ENCODE measurements at regions of chr1 and their contacts with region 1.

Region 1: GRCh38 chr1:32215629-32216480 is 6.3 kb downstream of the TMEM234 start:
- DNase-seq: no peak
- H3K4me3 ChIP-seq: no peak overlapping the region
- CTCF ChIP-seq: peak; percentile 86

Region 2: GRCh38 chr1:32151319-32151787 is 64.5 kb before region 1 on chr1:
- CTCF ChIA-PET with region 1: no interaction called
- POLR2A ChIA-PET with region 1: no interaction called
- DNase-seq: peak; percentile 65
- H3K4me3 ChIP-seq: no peak overlapping the region
- CTCF ChIP-seq: no peak

Region 3: DNA sequence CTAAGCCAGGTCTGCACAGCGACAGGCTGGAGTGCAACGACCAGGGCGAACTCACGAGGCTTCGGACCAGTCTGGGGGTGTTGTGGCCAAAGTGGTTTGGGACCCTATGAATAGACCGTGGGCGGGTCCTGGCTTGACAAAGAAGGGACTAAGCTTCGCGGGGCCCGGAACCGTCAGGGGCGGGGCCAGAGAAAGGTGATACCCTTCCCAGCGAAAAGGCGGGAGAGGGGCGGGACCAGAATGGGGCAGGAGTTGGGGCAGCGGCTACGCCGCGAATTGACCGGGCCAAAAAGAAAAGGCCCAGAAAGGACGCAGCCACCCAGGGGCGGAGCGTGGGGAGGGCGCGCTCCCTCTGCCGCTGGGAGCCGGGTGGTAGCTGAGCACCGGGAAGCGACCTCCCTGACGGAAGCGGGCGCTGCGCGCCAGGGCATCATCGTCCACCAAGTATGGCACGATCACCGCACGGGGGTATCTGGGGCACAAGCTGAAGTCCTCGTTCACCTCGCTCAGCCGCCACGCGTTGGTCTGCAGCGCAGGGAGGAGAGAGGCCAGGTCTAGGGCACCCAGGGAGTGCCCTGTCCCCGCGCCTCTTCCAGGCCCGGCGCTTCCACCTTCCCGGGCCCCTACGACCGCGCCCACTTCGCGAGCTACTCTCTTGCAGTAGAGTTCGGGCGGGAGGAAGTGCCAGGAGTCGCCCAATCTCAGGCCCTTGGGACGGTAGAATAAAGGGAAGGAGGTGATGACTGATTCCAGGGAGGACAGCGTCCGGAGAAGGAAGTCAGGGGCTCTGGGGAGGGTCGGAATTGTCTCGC is 24.5 kb after region 1 on chr1:
- CTCF ChIA-PET with region 1: interaction called, 32 read pairs
- POLR2A ChIA-PET with region 1: no interaction called
- DNase-seq: no peak
- H3K4me3 ChIP-seq: peak overlapping the region; percentile 67
- CTCF ChIP-seq: peak; percentile 37

Region 4: DNA sequence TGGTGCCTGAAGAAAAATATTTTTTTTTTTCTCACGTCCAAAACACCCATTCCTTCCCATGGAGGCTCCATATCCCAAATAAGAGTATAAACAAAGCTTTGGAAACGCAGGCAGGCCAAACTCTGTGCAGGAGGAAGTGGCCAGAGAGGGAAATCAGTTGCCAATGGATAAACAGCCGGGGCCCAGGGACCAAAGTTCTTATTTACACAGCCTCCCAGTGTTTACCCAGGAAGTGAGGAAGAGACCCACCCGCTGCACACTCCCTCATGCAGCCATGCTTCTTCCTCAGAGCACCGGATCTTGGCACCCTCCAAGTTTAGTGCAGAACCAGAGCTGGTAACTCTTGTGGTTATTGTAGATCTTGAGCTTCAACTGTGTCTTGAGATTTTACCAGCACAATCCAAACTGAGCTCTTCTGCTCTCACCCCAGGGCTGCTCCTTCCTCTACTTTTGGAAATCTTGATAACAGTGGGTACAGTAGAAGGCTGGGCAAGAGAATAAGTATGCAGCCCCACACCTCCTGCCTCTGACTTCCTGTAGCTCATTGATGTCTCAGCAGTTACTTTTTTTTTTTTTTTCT is 105.9 kb after region 1 on chr1:
- CTCF ChIA-PET with region 1: interaction called, 103 read pairs
- POLR2A ChIA-PET with region 1: no interaction called
- DNase-seq: no peak
- H3K4me3 ChIP-seq: no peak overlapping the region
- CTCF ChIP-seq: no peak

Region 5: DNA sequence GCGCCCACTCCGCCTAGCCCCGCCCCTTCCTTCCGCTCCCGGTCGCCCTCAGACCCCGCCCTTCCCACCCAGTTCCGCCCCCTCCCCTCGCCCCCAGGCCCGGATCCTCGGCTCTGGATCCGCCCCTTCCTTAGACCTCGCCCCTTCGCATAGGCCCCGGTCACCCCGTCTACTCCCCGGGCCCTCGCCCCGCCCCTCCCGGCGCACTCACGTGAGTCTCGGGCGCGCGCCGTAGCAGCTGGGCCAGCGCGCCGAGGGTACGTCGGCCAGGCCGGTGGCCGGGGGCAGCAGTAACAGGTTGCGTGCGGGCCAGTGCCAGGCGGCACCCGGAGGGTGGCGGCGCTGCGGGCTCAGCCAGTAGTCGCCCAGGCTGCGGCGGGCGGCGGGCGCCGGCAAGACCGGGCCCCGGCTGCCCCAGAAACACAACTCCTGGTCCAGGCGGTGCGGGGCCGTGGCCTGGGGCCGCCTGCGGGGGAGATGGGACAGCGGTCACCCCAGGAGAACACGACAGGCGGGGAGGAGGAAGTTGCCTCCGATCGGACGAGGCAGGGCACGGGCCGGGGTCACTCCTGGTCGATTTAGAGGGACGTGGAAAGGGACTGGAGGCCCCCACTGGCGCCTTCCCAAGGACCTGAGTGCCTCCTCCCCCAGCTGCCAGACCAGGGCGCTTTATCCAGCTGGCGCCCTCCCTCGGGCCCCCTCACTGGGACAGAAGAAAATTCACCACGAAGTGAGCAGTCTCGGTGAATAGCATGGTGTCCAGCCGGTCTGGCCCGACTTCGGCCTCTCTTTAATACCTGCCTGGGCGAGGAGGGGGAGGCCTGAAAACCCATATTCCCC is 135.8 kb after region 1 on chr1:
- CTCF ChIA-PET with region 1: interaction called, 26 read pairs
- POLR2A ChIA-PET with region 1: no interaction called
- DNase-seq: peak; percentile 44
- H3K4me3 ChIP-seq: peak overlapping the region; percentile 71
- CTCF ChIP-seq: peak; percentile 8

Region 6: GRCh38 chr1:32386676-32387392 is 171.0 kb after region 1 on chr1:
- CTCF ChIA-PET with region 1: interaction called, 11 read pairs
- POLR2A ChIA-PET with region 1: no interaction called
- DNase-seq: no peak
- H3K4me3 ChIP-seq: no peak overlapping the region
- CTCF ChIP-seq: no peak

Region 7: DNA sequence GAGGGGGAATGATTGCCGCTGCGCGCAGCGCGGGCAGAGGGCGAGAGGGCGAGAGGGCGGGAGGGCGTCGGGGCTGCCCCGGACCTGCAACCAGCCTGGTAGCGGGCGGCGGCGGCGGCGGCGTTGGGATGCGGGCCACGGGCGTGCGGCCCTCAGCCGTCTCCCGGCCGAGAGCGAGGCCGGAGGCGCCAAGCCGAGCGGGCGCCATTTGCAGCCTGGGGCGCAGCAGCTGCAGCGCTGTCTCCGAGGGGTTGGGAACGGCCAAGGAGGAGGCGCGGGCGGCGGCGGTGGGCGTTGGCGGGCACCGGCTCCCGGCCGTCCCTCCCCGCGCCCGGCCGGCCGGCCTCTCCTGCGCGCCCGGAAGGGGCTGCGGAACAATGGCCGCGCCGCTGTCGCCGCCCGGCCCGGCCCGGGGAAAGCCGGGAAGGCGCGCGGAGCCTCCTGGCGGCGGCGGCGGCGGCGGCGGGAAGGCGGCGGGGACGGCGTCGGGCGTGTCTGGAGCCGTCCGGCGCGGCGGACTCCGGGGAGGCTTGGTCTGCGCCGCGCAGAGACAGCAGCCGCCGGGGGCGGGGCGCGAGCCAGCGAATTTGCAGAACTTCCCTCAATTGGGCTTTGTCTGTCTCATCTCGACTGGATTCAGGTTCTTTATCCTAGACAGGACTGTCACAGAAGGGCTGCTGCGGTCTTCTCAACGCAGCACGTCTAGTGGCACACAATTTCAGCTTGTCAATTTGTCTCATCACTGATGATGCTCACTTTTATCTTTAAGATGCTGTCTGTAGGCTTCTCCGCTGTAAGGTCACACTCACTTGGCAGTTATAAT is 284.7 kb after region 1 on chr1:
- CTCF ChIA-PET with region 1: no interaction called
- POLR2A ChIA-PET with region 1: no interaction called
- DNase-seq: no peak
- H3K4me3 ChIP-seq: peak overlapping the region; percentile 60
- CTCF ChIP-seq: no peak